Sigmoid colon (tissue), 7 donors: ENCODE measurements at regions of chr13 and their contacts with region 1.

Region 1: DNA sequence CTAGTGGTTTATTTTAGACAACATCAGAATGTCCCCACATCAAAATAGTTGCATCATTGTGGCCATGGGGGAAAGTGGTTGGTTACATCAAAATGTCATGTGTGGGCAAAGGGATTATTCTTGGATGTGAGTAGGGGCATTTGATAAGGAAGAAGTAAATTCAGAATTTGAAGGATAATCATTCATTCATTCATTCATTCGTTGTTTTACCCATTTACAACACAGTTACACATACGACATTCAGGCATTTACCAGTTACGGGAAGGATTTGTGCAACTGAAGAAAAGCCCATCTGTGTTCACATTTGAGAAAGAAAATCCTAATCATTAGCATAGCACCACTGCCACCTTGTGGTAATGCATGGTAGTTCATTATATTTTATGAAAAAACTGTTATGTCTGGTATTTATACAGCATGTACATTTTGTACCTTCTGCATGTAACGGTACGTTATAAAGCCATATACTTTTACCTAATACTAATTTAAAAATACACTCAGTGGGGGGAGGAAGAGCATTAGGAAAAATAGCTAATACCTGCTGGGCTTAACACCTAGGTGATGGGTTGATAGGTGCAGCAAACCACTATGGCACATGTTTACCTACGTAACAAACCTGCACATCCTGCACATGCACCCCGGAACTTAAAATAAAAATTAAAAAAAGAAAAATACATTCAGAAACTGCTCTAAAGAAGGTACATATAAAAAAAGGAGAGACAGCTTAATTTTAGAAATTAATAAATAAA is 62.1 kb downstream of the DGKH start:
- DNase-seq: no peak
- H3K4me3 ChIP-seq: no peak overlapping the region
- H3K27ac ChIP-seq: no peak overlapping the region
- H3K4me1 ChIP-seq: peaks cover 0 to 15% (median 4%) of the 10 kb centered on the region in 4 donors
- H3K27me3 ChIP-seq: no peaks in the 10 kb centered on the region
- CTCF ChIP-seq: peak; percentile 74 to 85 (median 78)
- EP300 ChIP-seq: no peak
- POLR2A ChIP-seq: no peak

Region 2: GRCh38 chr13:41345914-41346589 is 764.5 kb before region 1 on chr13:
- intact Hi-C with region 1: loop called (anchors 10 kb)
- DNase-seq: no peak
- H3K4me3 ChIP-seq: no peak overlapping the region
- H3K27ac ChIP-seq: no peak overlapping the region
- H3K4me1 ChIP-seq: no peaks in the 10 kb centered on the region
- H3K27me3 ChIP-seq: no peaks in the 10 kb centered on the region
- CTCF ChIP-seq: no peak
- EP300 ChIP-seq: no peak
- POLR2A ChIP-seq: no peak

Region 3: DNA sequence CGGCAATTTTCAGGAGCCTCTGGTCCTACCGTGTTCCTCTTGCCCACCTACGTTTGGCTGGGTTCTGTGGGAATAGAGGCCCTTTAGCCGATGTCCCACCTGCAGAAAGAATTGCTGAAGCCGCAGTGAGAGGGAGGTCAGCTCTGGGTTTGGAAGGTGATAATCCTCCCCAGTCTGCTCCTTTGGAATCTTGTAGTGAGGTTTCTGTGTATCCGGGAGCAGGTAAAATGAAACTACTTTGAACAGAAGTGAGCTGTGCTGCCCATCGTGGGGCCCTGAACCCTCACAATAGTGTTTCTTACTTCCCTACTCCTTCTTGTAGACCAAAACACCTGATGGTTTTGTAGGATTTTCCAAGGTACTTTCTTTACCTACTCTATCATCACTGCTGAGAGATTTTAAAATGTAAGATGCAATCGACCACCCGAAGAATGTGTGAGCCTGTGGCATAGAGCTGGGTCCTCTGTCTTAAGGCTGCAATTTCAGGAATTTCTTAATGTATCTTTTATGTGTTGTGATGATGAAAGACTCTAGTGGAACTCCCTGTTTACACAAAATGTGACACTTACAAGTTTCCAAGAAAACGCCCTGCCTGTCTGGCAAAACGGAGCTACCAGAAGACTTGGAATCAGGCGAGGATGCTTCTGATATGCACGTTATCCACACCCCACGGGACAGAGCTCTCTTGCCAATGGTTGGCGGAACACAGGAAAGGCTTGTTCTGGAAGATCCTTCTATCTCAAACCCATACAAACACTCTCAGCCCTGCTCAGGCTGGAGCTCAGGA is 577.1 kb before region 1 on chr13:
- intact Hi-C with region 1: no loop called
- DNase-seq: peak; percentile 77
- H3K4me3 ChIP-seq: no peak overlapping the region
- H3K27ac ChIP-seq: no peak overlapping the region
- H3K4me1 ChIP-seq: peaks cover 0 to 12% (median 10%) of the 10 kb centered on the region in 4 donors
- H3K27me3 ChIP-seq: no peaks in the 10 kb centered on the region
- CTCF ChIP-seq: no peak
- EP300 ChIP-seq: no peak
- POLR2A ChIP-seq: no peak

Region 4: DNA sequence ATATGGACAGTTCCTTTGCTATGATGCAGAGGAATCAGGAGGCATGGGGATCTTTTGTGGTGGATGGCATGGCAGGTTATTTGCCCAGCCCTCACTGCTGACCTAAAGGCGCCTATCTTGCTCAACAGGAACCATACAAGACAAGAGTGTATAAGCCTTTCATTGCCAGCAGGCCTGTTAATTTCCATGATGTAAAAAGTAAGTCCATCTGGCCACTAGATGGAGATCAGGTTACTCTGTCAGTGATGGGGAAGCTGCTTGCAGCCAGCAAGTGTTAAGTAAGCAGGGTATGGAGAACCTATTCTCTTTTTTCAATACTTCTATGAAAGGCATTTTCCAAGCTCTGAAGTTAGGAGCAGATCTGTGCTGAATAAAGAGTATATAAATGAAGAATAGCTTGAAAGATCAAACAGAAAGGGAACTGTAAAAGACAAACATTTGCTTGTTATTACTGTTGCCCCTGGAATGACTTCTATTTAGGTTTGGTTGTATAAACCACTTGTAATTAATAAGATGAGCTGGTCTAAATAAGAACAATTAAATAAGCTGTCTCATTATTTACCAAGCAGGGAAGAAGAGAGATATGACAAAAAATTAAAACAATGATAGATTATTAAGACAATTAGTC is 442.3 kb before region 1 on chr13:
- intact Hi-C with region 1: loop called (anchors 2 kb)
- DNase-seq: peak; percentile 83
- H3K4me3 ChIP-seq: no peak overlapping the region
- H3K27ac ChIP-seq: peak overlapping the region in 3 of 4 donors; percentile 4 to 41 (median 24)
- H3K4me1 ChIP-seq: peaks cover 0 to 24% (median 5%) of the 10 kb centered on the region in 4 donors
- H3K27me3 ChIP-seq: no peaks in the 10 kb centered on the region
- CTCF ChIP-seq: peak; percentile 59 to 90 (median 82)
- EP300 ChIP-seq: no peak
- POLR2A ChIP-seq: no peak

Region 5: DNA sequence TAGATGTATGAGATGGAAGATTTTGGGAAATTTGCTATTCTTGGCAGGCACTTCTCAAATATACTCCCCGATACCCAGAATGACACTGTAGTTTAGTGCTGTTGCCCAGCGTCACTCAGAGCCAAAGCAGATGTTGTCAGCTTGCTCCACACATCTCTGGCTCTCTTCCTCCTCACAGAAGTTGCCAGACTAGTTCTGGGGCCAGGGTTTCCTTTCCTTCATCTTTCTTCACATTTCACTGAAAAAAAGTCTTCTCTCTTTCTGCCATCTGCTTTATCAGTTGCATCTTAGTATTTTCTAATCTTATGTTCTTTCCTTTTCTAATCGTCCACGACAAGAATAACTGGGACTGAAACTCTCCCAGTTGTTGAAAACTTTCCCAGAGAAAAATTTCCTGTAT is 401.9 kb before region 1 on chr13:
- intact Hi-C with region 1: loop called (anchors 5 kb)
- DNase-seq: peak; percentile 55
- H3K4me3 ChIP-seq: no peak overlapping the region
- H3K27ac ChIP-seq: peak overlapping the region in 3 of 4 donors; percentile 2 to 66 (median 5)
- H3K4me1 ChIP-seq: peaks cover 0 to 48% (median 21%) of the 10 kb centered on the region in 4 donors
- H3K27me3 ChIP-seq: no peaks in the 10 kb centered on the region
- CTCF ChIP-seq: no peak
- EP300 ChIP-seq: no peak
- POLR2A ChIP-seq: no peak

Region 6: GRCh38 chr13:41916173-41916954 is 194.2 kb before region 1 on chr13:
- intact Hi-C with region 1: loop called (anchors 5 kb)
- DNase-seq: no peak
- H3K4me3 ChIP-seq: peak overlapping the region in 1 of 4 donors; percentile 7
- H3K27ac ChIP-seq: peak overlapping the region in 2 of 4 donors; percentile 29 to 68
- H3K4me1 ChIP-seq: peaks cover 0 to 42% (median 26%) of the 10 kb centered on the region in 4 donors
- H3K27me3 ChIP-seq: no peaks in the 10 kb centered on the region
- CTCF ChIP-seq: no peak
- EP300 ChIP-seq: no peak
- POLR2A ChIP-seq: no peak

Region 7: DNA sequence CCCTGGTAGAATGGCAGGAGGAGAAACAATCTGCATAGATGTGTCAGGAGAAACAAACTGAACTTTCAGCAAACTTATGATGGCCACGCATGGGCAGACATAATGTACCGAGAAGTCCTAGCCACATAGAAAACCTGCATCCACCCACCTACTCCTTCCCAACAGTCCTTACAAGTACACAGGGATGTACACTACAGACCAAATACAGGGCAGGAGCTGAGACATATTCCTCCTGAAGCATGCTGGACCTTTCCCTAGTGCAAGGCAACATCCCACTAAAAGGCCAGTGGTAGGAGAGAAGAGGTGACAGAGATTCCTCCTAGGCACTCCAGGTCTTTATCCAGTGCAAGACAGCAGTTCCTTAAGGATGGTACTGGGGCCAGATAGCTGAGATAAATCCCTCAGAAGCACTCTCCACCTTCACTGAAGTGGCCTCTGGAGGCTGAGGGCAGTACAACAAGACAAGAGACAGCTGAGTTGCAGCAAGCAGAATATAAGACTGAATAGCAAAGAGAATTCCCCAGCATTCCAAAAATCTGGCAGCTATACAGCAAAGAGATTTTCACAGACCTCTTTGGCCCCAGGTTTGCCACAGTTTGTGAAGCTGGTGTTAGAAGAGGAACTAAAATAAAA is 168.0 kb before region 1 on chr13:
- intact Hi-C with region 1: no loop called
- DNase-seq: no peak
- H3K4me3 ChIP-seq: no peak overlapping the region
- H3K27ac ChIP-seq: no peak overlapping the region
- H3K4me1 ChIP-seq: peaks cover 0 to 2% (median 0%) of the 10 kb centered on the region in 4 donors
- H3K27me3 ChIP-seq: no peaks in the 10 kb centered on the region
- CTCF ChIP-seq: no peak
- EP300 ChIP-seq: no peak
- POLR2A ChIP-seq: no peak

Region 8: DNA sequence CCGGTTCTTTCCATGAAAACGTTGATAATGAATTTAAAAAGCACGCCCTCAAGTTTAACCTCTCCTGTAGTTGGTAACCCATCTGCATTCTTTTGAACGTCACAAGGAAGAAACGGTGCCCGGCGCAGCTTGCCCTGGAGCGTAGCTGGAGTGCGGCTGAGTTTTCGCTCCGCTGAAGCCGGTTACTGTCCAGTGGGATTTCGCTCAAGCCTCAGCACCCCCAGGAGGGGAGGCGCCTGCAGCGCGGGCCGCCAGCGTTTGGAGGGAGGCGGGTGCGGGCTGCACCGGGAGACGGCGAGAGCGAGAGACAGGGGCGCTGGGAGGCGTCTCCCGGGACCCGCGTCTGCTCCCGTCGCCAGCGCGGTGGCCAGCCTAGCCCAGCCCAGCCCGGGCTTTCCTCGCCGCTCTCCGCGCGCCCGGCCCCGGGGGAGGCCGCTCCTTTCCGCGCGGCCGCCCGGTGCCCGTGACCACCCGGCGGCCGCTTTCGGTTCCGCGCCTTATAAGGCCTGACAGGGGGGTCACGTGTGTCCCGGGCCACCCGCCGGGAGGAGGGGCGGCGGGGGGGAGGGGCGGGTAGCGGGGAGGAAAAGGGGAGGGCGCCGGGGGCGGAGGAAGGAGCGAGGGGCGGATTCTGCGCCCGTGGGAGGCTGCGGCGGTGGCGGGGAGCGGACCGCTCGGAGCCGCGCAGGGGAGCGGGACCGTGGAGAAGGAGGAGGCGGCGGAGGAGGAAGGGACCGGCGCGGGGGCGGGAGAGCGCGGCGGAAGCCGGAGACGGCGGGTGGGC is 70.4 kb before region 1 on chr13:
- intact Hi-C with region 1: loop called (anchors 2 kb)
- DNase-seq: peak; percentile 97
- H3K4me3 ChIP-seq: peak overlapping the region; percentile 71 to 89 (median 86)
- H3K27ac ChIP-seq: peak overlapping the region; percentile 95 to 99 (median 99)
- H3K4me1 ChIP-seq: peaks cover 0 to 19% (median 12%) of the 10 kb centered on the region in 4 donors
- H3K27me3 ChIP-seq: no peaks in the 10 kb centered on the region
- CTCF ChIP-seq: no peak
- EP300 ChIP-seq: no peak
- POLR2A ChIP-seq: peak; percentile 18 to 28